ENCODE measurements at regions of chr1 and their contacts with region 1.

Region 1: DNA sequence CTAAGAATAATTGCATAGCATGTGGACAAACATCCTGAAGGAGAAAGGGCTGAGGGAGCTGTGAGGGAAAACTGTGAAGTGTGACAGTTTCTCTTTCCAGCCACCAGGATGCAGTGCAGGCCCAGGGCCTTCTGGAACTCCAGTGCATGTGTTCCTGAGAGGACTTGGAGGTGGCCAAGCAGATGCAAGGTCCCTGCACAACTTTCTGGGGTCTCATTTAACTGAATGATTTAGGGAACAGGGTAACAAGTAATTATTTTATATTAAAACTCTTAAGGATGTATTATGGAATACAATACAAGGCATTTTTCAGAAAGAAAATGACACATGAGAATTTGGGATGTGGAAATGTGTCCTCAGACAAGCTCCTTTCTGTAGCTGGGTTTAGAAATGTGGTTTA is 61.2 kb upstream of the MCOLN3 start:
- DNase-seq: no peak
- ATAC-seq: peak; percentile 80

Region 2: DNA sequence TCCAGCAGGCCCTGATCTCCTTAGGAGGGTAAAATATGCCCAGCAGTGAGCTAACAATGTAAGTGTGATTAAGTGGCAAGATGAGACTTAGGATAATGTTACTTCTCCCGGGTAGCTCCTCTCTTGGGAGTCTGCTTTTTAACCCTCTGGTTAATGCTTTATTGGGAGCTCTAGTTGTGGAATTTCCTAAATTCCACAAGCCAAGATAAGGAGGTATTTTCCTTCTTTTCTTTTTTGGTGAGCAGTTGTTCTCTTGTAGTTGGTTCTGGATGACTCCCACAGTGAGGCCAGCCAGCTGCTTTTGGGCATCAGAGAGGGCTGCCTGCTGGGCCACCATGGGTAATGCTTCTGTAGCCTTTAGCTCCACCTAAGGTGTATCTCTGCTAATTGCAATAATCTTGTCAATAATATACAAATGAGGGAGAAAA is 130.7 kb after region 1 on chr1:
- intact Hi-C with region 1: loop called (anchors 5 kb)
- DNase-seq: no peak
- ATAC-seq: no peak

Region 3: DNA sequence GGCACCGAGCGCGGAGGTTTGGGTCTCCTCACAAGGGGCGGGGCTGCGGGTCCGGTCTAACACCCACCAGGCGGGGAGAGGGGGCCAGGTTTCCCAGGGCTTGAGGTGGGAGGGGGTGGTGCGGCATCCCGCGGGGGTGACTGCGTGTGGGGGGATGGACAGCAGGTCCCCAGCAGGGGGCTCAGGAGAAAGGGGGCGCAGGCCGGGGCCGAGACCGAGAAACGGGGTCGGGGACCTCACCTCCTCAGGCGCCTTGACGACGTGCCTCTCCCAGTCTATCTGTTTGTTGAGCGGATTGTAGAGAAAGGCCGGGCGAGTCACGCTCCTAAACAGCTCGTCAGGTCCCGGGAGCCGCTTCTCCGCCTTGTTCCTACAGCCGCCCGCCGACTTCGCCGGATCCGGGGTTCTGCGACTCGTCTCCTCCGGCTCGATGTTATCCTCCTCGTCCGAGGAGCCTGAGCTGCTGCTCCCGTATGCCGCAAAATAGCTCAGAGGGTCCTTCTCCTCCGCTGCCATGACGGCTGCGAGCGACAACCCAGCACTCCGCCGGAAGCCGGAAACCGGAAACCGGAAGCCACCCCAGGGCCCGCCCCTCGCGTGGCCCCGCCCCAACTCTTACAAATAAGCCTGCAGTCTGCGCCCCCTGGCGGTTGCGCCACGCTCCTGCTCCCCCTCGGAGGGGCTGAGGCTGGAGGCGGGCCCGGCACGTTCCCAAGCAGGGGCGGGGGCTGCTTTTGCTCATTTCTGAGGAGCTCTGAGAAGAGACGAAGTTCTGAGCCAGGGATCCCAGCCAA is 149.8 kb after region 1 on chr1 and contains the start of gene C1orf52:
- intact Hi-C with region 1: loop called (anchors 2 kb)
- DNase-seq: peak; percentile 98
- ATAC-seq: peak; percentile 98
- total RNA-seq, gene C1orf52: 17.1 TPM

Region 4: GRCh38 chr1:85681087-85681486 is 571.6 kb after region 1 on chr1:
- intact Hi-C with region 1: no loop called
- DNase-seq: no peak
- ATAC-seq: peak; percentile 63